ENCODE measurements at regions of chr19 and their contacts with region 1.

Region 1: DNA sequence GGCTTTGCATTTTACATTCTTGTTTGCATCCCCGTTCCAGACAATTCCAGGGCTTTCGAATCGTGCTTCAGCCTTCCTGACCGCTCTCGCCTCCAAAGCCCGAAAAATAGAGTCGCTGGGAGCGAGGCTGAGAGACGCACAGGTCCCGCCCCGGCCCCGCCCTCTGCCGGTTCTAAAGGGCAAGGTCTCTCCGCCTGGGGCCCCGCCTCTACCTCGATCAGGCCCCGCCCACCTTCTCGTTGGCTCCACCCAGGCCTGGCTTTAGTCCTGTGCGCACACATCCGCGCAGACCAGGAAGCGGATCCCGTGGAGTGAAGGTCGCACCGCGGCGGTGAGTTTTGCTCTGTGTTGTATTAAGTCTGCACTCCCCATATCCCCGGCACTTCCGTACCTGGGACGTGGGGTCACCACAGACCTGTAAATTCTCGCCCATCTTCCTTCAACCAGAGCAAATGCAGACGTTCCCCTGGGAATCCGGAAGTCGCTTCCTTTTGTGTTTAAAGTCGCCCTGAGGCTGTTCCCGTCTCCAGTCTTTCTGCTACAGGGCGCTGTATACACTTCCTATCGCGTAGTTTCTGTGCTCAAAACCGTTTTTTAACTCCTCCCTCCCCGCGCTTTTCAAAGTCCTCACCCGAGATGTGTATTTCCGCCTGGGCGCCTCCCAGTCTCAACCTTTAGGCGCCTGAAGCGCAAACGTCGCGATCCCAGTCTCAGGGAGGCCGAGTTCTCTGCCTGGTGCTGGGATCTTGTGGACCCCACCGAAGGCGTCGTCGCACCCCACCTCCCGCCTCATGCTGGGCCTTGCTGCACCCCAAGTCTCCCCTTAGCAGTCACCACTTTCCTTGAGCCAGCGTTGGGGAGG is at the start of gene ZNF701:
- DNase-seq: peak; percentile 95 to 96 (median 95)
- H3K4me3 ChIP-seq: peak within 1 kb of the TSS; percentile 89 to 96
- H3K4me3 Mint-ChIP-seq: peak within 1 kb of the TSS; percentile 91 to 98 (median 96)
- H3K27ac ChIP-seq: peak within 1 kb of the TSS; percentile 67
- H3K27ac Mint-ChIP-seq: peak within 1 kb of the TSS; percentile 83 to 99 (median 97)
- H3K4me1 ChIP-seq: peaks cover 16% of the 10 kb centered on the region
- H3K4me1 Mint-ChIP-seq: peaks cover 16 to 41% (median 34%) of the 10 kb centered on the region in 4 donors
- H3K27me3 ChIP-seq: no peaks in the 10 kb centered on the region
- H3K27me3 Mint-ChIP-seq: no peaks in the 10 kb centered on the region
- total RNA-seq, gene ZNF701: 51.1 to 51.7 TPM

Region 2: GRCh38 chr19:52296773-52297600 is 273.2 kb before region 1 on chr19 and contains the start of gene ZNF480:
- CTCF ChIA-PET with region 1: no interaction called
- POLR2A ChIA-PET with region 1: no interaction called
- intact Hi-C with region 1: loop called (anchors 1 kb)
- DNase-seq: peak; percentile 87 to 89 (median 87)
- H3K4me3 ChIP-seq: peak within 1 kb of the TSS; percentile 89 to 92
- H3K4me3 Mint-ChIP-seq: peak within 1 kb of the TSS; percentile 94 to 99 (median 96)
- H3K27ac ChIP-seq: peak within 1 kb of the TSS; percentile 72
- H3K27ac Mint-ChIP-seq: peak within 1 kb of the TSS; percentile 97 to 100 (median 98)
- H3K4me1 ChIP-seq: peaks cover 16% of the 10 kb centered on the region
- H3K4me1 Mint-ChIP-seq: peaks cover 17 to 24% (median 19%) of the 10 kb centered on the region in 4 donors
- H3K27me3 ChIP-seq: no peaks in the 10 kb centered on the region
- H3K27me3 Mint-ChIP-seq: peaks cover 0 to 3% of the 10 kb centered on the region in 2 donors
- total RNA-seq, gene ZNF480: 26.7 to 26.9 TPM

Region 3: DNA sequence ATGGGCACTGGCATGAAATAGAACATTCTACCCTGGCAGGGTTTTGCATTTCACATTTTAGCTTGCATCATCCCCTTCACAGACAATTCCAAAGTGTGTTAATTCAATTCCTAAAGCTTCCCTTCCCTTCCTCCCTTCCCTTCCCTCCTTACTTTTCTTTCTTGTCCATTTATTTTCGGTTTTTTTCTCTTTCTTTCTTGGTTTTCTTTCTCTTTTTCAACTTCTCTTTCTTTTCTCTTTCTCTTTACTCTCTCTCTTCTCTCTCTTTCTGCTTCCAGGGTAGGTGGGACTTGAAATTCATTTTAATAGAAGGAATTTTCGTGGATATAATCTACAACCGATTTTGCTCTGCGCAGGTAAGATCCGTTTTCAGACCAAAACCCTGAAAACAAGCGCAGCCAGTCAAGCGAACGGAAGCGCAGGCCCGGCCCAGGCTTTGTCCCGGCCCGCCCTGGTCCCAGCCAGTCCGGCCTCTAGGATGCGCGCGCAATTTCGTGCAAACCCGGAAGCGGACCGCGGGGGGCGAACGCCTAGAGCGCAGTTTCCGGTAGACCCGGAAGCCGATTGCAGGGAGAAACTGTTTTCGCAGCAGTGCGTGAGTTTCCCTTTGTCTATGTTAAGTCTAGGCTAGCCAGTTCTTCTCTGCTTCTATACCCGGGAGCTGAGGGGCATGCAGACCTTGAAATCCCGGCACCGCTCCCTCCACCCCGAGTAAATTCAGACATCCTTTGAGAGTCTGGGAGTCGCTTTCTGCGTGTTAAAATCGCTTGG is 172.7 kb before region 1 on chr19 and contains the start of gene ZNF528:
- CTCF ChIA-PET with region 1: no interaction called
- POLR2A ChIA-PET with region 1: no interaction called
- intact Hi-C with region 1: loop called (anchors 1 kb)
- DNase-seq: peak; percentile 85 to 93 (median 88)
- H3K4me3 ChIP-seq: peak within 1 kb of the TSS; percentile 89 to 98
- H3K4me3 Mint-ChIP-seq: peak within 1 kb of the TSS; percentile 86 to 95 (median 90)
- H3K27ac ChIP-seq: peak within 1 kb of the TSS; percentile 56
- H3K27ac Mint-ChIP-seq: peak within 1 kb of the TSS; percentile 76 to 93 (median 92)
- H3K4me1 ChIP-seq: peaks cover 14% of the 10 kb centered on the region
- H3K4me1 Mint-ChIP-seq: peaks cover 13 to 29% (median 22%) of the 10 kb centered on the region in 4 donors
- H3K27me3 ChIP-seq: no peaks in the 10 kb centered on the region
- H3K27me3 Mint-ChIP-seq: no peaks in the 10 kb centered on the region
- total RNA-seq, gene ZNF528: 44.6 to 49.9 TPM

Region 4: GRCh38 chr19:52535771-52536447 is 34.3 kb before region 1 on chr19:
- CTCF ChIA-PET with region 1: no interaction called
- POLR2A ChIA-PET with region 1: no interaction called
- intact Hi-C with region 1: loop called (anchors 1 kb)
- DNase-seq: peak; percentile 79 to 93 (median 83)
- H3K4me3 ChIP-seq: peak overlapping the region; percentile 84 to 90
- H3K4me3 Mint-ChIP-seq: peak overlapping the region; percentile 87 to 97 (median 94)
- H3K27ac ChIP-seq: peak overlapping the region; percentile 80
- H3K27ac Mint-ChIP-seq: peak overlapping the region; percentile 84 to 97 (median 89)
- H3K4me1 ChIP-seq: peaks cover 12% of the 10 kb centered on the region
- H3K4me1 Mint-ChIP-seq: peaks cover 10 to 49% (median 32%) of the 10 kb centered on the region in 4 donors
- H3K27me3 ChIP-seq: no peaks in the 10 kb centered on the region
- H3K27me3 Mint-ChIP-seq: no peaks in the 10 kb centered on the region

Region 5: GRCh38 chr19:52601025-52601973 is 31.1 kb after region 1 on chr19:
- CTCF ChIA-PET with region 1: no interaction called
- POLR2A ChIA-PET with region 1: no interaction called
- intact Hi-C with region 1: loop called (anchors 1 kb)
- DNase-seq: peak; percentile 90 to 92 (median 90)
- H3K4me3 ChIP-seq: peak overlapping the region; percentile 57 to 63
- H3K4me3 Mint-ChIP-seq: peak overlapping the region; percentile 93 to 97 (median 94)
- H3K27ac ChIP-seq: peak overlapping the region; percentile 66
- H3K27ac Mint-ChIP-seq: peak overlapping the region; percentile 65 to 96 (median 93)
- H3K4me1 ChIP-seq: peaks cover 15% of the 10 kb centered on the region
- H3K4me1 Mint-ChIP-seq: peaks cover 16 to 40% (median 27%) of the 10 kb centered on the region in 4 donors
- H3K27me3 ChIP-seq: no peaks in the 10 kb centered on the region
- H3K27me3 Mint-ChIP-seq: no peaks in the 10 kb centered on the region

Region 6: GRCh38 chr19:52637718-52638585 is 67.7 kb after region 1 on chr19 and contains the start of gene ZNF83:
- CTCF ChIA-PET with region 1: no interaction called
- POLR2A ChIA-PET with region 1: interaction called, 3 read pairs
- intact Hi-C with region 1: loop called (anchors 1 kb)
- DNase-seq: peak; percentile 85 to 95 (median 92)
- H3K4me3 ChIP-seq: peak within 1 kb of the TSS; percentile 72 to 98
- H3K4me3 Mint-ChIP-seq: peak within 1 kb of the TSS; percentile 91 to 99 (median 97)
- H3K27ac ChIP-seq: peak within 1 kb of the TSS; percentile 87
- H3K27ac Mint-ChIP-seq: peak within 1 kb of the TSS; percentile 90 to 99 (median 98)
- H3K4me1 ChIP-seq: peaks cover 20% of the 10 kb centered on the region
- H3K4me1 Mint-ChIP-seq: peaks cover 10 to 23% (median 16%) of the 10 kb centered on the region in 4 donors
- H3K27me3 ChIP-seq: no peaks in the 10 kb centered on the region
- H3K27me3 Mint-ChIP-seq: no peaks in the 10 kb centered on the region
- total RNA-seq, gene ZNF83: 128 to 130 TPM

Region 7: GRCh38 chr19:52734893-52735661 is 164.8 kb after region 1 on chr19 and contains the start of gene ZNF611:
- CTCF ChIA-PET with region 1: no interaction called
- POLR2A ChIA-PET with region 1: no interaction called
- intact Hi-C with region 1: loop called (anchors 1 kb)
- DNase-seq: peak; percentile 98 to 99 (median 98)
- H3K4me3 ChIP-seq: peak within 1 kb of the TSS; percentile 94 to 98
- H3K4me3 Mint-ChIP-seq: peak within 1 kb of the TSS; percentile 90 to 97 (median 94)
- H3K27ac ChIP-seq: peak within 1 kb of the TSS; percentile 80
- H3K27ac Mint-ChIP-seq: peak within 1 kb of the TSS; percentile 94 to 98 (median 97)
- H3K4me1 ChIP-seq: peaks cover 22% of the 10 kb centered on the region
- H3K4me1 Mint-ChIP-seq: peaks cover 17 to 34% (median 25%) of the 10 kb centered on the region in 4 donors
- H3K27me3 ChIP-seq: no peaks in the 10 kb centered on the region
- H3K27me3 Mint-ChIP-seq: no peaks in the 10 kb centered on the region
- total RNA-seq, gene ZNF611: 52.8 to 53.7 TPM

Measured in CD4-positive, alpha-beta memory T cell (primary cell).